Esophagus squamous epithelium (tissue), 5 donors: ENCODE measurements at regions of chr14 and their contacts with region 1.

Region 1: DNA sequence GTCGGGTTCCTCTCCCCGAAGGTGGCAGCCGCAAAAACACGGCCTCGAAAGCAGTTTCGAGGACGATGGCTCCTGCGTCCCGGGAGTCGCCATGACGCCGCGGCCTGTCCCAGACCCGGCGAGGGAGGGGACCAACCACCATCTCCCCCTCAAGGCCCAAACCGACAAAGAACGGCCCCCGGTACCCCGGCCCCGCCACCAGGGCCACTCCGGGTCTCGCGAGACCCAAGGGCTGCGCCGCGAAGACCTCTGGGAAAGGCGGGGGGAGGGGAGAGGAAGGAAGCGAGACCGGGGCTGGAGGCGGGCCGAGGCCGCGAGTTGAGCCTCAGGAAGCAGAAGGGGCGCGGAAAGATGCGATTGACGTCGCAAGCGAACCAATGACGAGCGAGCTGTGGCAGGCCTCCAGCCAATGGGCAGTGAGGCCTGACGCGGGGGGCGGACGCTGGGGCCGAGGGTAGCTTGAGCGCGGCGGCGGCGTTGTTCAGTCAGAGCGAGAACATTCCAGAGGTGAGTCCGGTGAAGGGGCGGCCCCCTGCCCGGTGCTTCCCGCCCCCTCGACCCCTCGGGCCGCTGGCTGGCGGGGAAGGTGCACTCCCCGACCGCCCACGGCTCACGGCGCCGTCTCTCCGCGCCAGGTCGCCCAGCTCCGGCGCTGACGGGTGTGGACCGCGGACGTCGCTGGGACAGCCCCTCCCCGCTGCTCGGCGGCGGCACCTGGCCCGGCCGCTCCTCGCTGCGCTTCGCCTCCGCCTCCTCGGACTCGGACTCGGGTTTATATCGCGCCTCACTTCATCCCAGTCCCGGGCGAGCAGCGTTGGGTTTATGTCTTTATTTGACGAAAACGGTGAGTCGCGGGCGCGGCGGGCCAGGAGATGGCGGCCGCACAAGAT is at the start of gene EIF5:
- DNase-seq: peak; percentile 94
- H3K4me3 ChIP-seq: peak within 1 kb of the TSS; percentile 89 to 100 (median 96)
- H3K27ac ChIP-seq: peak within 1 kb of the TSS; percentile 99 to 100 (median 100)
- H3K4me1 ChIP-seq: peaks cover 4 to 49% (median 23%) of the 10 kb centered on the region in 3 donors
- H3K27me3 ChIP-seq: no peaks in the 10 kb centered on the region
- CTCF ChIP-seq: peak; percentile 8 to 76 (median 57)
- POLR2A ChIP-seq: peak; percentile 25 to 99 (median 94)
- total RNA-seq, gene EIF5: 157 to 273 (median 211) TPM

Region 2: GRCh38 chr14:103385152-103385993 is 51.4 kb after region 1 on chr14 and contains the start of gene MARK3:
- intact Hi-C with region 1: loop called (anchors 10 kb)
- DNase-seq: peak; percentile 91
- H3K4me3 ChIP-seq: peak within 1 kb of the TSS; percentile 67 to 93 (median 82)
- H3K27ac ChIP-seq: peak within 1 kb of the TSS; percentile 97 to 99 (median 98)
- H3K4me1 ChIP-seq: peaks cover 16 to 40% (median 26%) of the 10 kb centered on the region in 3 donors
- H3K27me3 ChIP-seq: no peaks in the 10 kb centered on the region
- CTCF ChIP-seq: peak in 3 of 6 experiments; percentile 9 to 41 (median 23)
- POLR2A ChIP-seq: peak in 3 of 4 donors; percentile 83 to 95 (median 86)
- total RNA-seq, gene MARK3: 44.4 to 112 (median 67.5) TPM